ENCODE measurements at regions of chr12 and their contacts with region 1.

Region 1: GRCh38 chr12:85448548-85449139 is 168.6 kb downstream of the ALX1 start:
- H3K4me3 Mint-ChIP-seq: no peak overlapping the region
- H3K27ac Mint-ChIP-seq: no peak overlapping the region
- H3K4me1 Mint-ChIP-seq: peaks cover 10% of the 10 kb centered on the region
- H3K27me3 Mint-ChIP-seq: no peaks in the 10 kb centered on the region

Region 2: DNA sequence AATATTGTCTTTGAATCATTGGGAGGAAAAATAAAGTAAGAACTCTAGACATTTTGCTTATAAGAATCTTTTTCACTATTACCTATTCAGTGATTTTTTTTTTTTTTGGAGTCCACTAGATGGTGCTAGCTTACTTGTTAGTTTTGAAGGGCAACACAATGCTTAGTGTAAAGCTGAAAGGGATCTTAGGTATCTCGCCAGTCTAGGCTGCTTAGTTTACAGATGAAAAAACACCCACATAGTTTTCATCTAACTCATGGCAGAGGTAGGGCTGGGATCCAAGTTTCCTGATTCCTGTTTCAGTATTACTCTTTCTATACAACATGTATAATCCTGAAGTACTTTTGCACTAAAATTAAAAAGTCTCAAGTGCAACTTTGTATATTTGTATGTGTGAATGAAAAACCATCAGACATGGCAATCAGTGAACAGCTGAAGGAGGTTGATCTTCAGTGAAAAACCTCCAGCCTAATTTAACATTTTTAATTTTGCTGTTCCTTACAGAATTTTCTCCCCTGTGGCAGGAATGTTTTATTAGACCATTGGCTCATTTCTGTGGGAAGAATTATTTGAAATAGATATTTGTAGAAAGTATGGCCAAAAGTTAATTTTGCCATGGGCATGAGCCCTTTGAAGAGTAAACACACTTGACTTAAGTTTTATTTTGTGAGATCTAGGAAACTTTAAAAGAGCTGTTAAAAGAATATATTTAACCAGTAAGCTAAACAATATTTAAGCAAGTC is 371.8 kb before region 1 on chr12:
- intact Hi-C with region 1: loop called (anchors 2 kb)
- H3K4me3 Mint-ChIP-seq: no peak overlapping the region
- H3K27ac Mint-ChIP-seq: no peak overlapping the region
- H3K4me1 Mint-ChIP-seq: no peaks in the 10 kb centered on the region
- H3K27me3 Mint-ChIP-seq: no peaks in the 10 kb centered on the region

Region 3: GRCh38 chr12:85424581-85425348 is 23.9 kb before region 1 on chr12:
- intact Hi-C with region 1: loop called (anchors 2 kb)
- H3K4me3 Mint-ChIP-seq: peak overlapping the region; percentile 54
- H3K27ac Mint-ChIP-seq: no peak overlapping the region
- H3K4me1 Mint-ChIP-seq: peaks cover 12% of the 10 kb centered on the region
- H3K27me3 Mint-ChIP-seq: peaks cover 1% of the 10 kb centered on the region

Region 4: GRCh38 chr12:85559536-85559935 is 110.9 kb after region 1 on chr12:
- intact Hi-C with region 1: loop called (anchors 5 kb)
- H3K4me3 Mint-ChIP-seq: no peak overlapping the region
- H3K27ac Mint-ChIP-seq: no peak overlapping the region
- H3K4me1 Mint-ChIP-seq: no peaks in the 10 kb centered on the region
- H3K27me3 Mint-ChIP-seq: no peaks in the 10 kb centered on the region